ENCODE measurements at regions of chr3 and their contacts with region 1.

Region 1: GRCh38 chr3:185983495-185984141 is 45.8 kb upstream of the TRA2B start:
- DNase-seq: peak; percentile 77
- ATAC-seq: peak; percentile 84
- H3K4me3 ChIP-seq: no peak overlapping the region
- H3K4me3 Mint-ChIP-seq: no peak overlapping the region
- H3K27ac ChIP-seq: no peak overlapping the region
- H3K27ac Mint-ChIP-seq: no peak overlapping the region
- H3K4me1 ChIP-seq: peaks cover 6 to 8% of the 10 kb centered on the region in 2 donors
- H3K4me1 Mint-ChIP-seq: no peaks in the 10 kb centered on the region
- H3K27me3 ChIP-seq: peaks cover 0 to 16% (median 2%) of the 10 kb centered on the region in 4 experiments
- H3K27me3 Mint-ChIP-seq: peaks cover 10% of the 10 kb centered on the region
- CTCF ChIP-seq: peak; percentile 94

Region 2: GRCh38 chr3:185552358-185552877 is 431.2 kb before region 1 on chr3 and contains the start of gene LIPH:
- CTCF ChIA-PET with region 1: no interaction called
- POLR2A ChIA-PET with region 1: no interaction called
- intact Hi-C with region 1: no loop called
- DNase-seq: no peak
- ATAC-seq: no peak
- H3K4me3 ChIP-seq: no peak within 1 kb of the TSS
- H3K4me3 Mint-ChIP-seq: no peak within 1 kb of the TSS
- H3K27ac ChIP-seq: no peak within 1 kb of the TSS
- H3K27ac Mint-ChIP-seq: no peak within 1 kb of the TSS
- H3K4me1 ChIP-seq: no peaks in the 10 kb centered on the region
- H3K4me1 Mint-ChIP-seq: no peaks in the 10 kb centered on the region
- H3K27me3 ChIP-seq: no peaks in the 10 kb centered on the region
- H3K27me3 Mint-ChIP-seq: peaks cover 2% of the 10 kb centered on the region
- CTCF ChIP-seq: no peak
- total RNA-seq, gene LIPH: not detected in 2 replicates

Region 3: DNA sequence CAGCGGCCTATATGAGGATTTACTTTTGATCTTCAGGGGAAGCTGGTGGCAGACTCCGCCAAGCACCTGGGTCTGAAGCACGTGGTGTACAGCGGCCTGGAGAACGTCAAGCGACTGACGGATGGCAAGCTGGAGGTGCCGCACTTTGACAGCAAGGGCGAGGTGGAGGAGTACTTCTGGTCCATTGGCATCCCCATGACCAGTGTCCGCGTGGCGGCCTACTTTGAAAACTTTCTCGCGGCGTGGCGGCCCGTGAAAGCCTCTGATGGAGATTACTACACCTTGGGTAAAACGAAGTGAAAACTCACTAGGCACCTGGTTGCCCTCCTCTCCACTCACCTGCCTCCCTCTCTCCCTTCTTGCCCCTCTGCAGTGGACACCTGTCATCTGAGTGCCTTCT is 12.0 kb before region 1 on chr3:
- CTCF ChIA-PET with region 1: interaction called, 18 read pairs
- POLR2A ChIA-PET with region 1: no interaction called
- intact Hi-C with region 1: no loop called
- DNase-seq: no peak
- ATAC-seq: no peak
- H3K4me3 ChIP-seq: no peak overlapping the region
- H3K4me3 Mint-ChIP-seq: no peak overlapping the region
- H3K27ac ChIP-seq: no peak overlapping the region
- H3K27ac Mint-ChIP-seq: no peak overlapping the region
- H3K4me1 ChIP-seq: no peaks in the 10 kb centered on the region
- H3K4me1 Mint-ChIP-seq: no peaks in the 10 kb centered on the region
- H3K27me3 ChIP-seq: no peaks in the 10 kb centered on the region
- H3K27me3 Mint-ChIP-seq: peaks cover 4% of the 10 kb centered on the region
- CTCF ChIP-seq: no peak

Region 4: GRCh38 chr3:185995352-185995751 is 11.7 kb after region 1 on chr3:
- CTCF ChIA-PET with region 1: interaction called, 13 read pairs
- POLR2A ChIA-PET with region 1: no interaction called
- intact Hi-C with region 1: no loop called
- DNase-seq: no peak
- ATAC-seq: no peak
- H3K4me3 ChIP-seq: no peak overlapping the region
- H3K4me3 Mint-ChIP-seq: no peak overlapping the region
- H3K27ac ChIP-seq: no peak overlapping the region
- H3K27ac Mint-ChIP-seq: no peak overlapping the region
- H3K4me1 ChIP-seq: no peaks in the 10 kb centered on the region
- H3K4me1 Mint-ChIP-seq: no peaks in the 10 kb centered on the region
- H3K27me3 ChIP-seq: peaks cover 0 to 7% (median 0%) of the 10 kb centered on the region in 4 experiments
- H3K27me3 Mint-ChIP-seq: peaks cover 10% of the 10 kb centered on the region
- CTCF ChIP-seq: no peak

Region 5: GRCh38 chr3:186742618-186743380 is 759.2 kb after region 1 on chr3:
- CTCF ChIA-PET with region 1: interaction called, 11 read pairs
- POLR2A ChIA-PET with region 1: no interaction called
- intact Hi-C with region 1: no loop called
- DNase-seq: no peak
- ATAC-seq: no peak
- H3K4me3 ChIP-seq: no peak overlapping the region
- H3K4me3 Mint-ChIP-seq: no peak overlapping the region
- H3K27ac ChIP-seq: no peak overlapping the region
- H3K27ac Mint-ChIP-seq: no peak overlapping the region
- H3K4me1 ChIP-seq: no peaks in the 10 kb centered on the region
- H3K4me1 Mint-ChIP-seq: peaks cover 4% of the 10 kb centered on the region
- H3K27me3 ChIP-seq: peaks cover 0 to 4% (median 0%) of the 10 kb centered on the region in 4 experiments
- H3K27me3 Mint-ChIP-seq: peaks cover 6% of the 10 kb centered on the region
- CTCF ChIP-seq: no peak

Region 6: GRCh38 chr3:186821429-186822367 is 838.1 kb after region 1 on chr3:
- CTCF ChIA-PET with region 1: interaction called, 11 read pairs
- POLR2A ChIA-PET with region 1: no interaction called
- intact Hi-C with region 1: loop called (anchors 1 kb)
- DNase-seq: peak; percentile 66
- ATAC-seq: no peak
- H3K4me3 ChIP-seq: no peak overlapping the region
- H3K4me3 Mint-ChIP-seq: no peak overlapping the region
- H3K27ac ChIP-seq: no peak overlapping the region
- H3K27ac Mint-ChIP-seq: no peak overlapping the region
- H3K4me1 ChIP-seq: peaks cover 19 to 21% of the 10 kb centered on the region in 2 donors
- H3K4me1 Mint-ChIP-seq: peaks cover 19% of the 10 kb centered on the region
- H3K27me3 ChIP-seq: peaks cover 0 to 27% (median 15%) of the 10 kb centered on the region in 4 experiments
- H3K27me3 Mint-ChIP-seq: peaks cover 19% of the 10 kb centered on the region
- CTCF ChIP-seq: peak; percentile 80